CD4-positive, alpha-beta T cell (primary cell): ENCODE measurements at regions of chr4 and their contacts with region 1.

Region 1: GRCh38 chr4:81494031-81494431 is 22.3 kb upstream of the RASGEF1B start:
- DNase-seq: peak in 3 of 14 experiments; percentile 57 to 73 (median 59)
- ATAC-seq: no peak
- H3K4me3 ChIP-seq: peak overlapping the region; percentile 36
- H3K4me3 Mint-ChIP-seq: peak overlapping the region; percentile 75
- H3K27ac ChIP-seq: peak overlapping the region; percentile 44 to 52
- H3K27ac Mint-ChIP-seq: peak overlapping the region; percentile 79
- H3K4me1 ChIP-seq: peaks cover 13% of the 10 kb centered on the region
- H3K4me1 Mint-ChIP-seq: peaks cover 50% of the 10 kb centered on the region
- H3K27me3 ChIP-seq: no peaks in the 10 kb centered on the region
- H3K27me3 Mint-ChIP-seq: no peaks in the 10 kb centered on the region
- CTCF ChIP-seq: no peak

Region 2: GRCh38 chr4:81505004-81505598 is 11.1 kb after region 1 on chr4:
- CTCF ChIA-PET with region 1: interaction called, 3 read pairs
- POLR2A ChIA-PET with region 1: interaction called, 7 read pairs
- intact Hi-C with region 1: loop called in 1 of 2 experiments (anchors 1 kb)
- DNase-seq: peak; percentile 27 to 85 (median 58)
- ATAC-seq: peak; percentile 89
- H3K4me3 ChIP-seq: no peak overlapping the region
- H3K4me3 Mint-ChIP-seq: peak overlapping the region; percentile 52
- H3K27ac ChIP-seq: peak overlapping the region; percentile 47 to 71
- H3K27ac Mint-ChIP-seq: peak overlapping the region; percentile 89
- H3K4me1 ChIP-seq: peaks cover 30% of the 10 kb centered on the region
- H3K4me1 Mint-ChIP-seq: peaks cover 32% of the 10 kb centered on the region
- H3K27me3 ChIP-seq: no peaks in the 10 kb centered on the region
- H3K27me3 Mint-ChIP-seq: no peaks in the 10 kb centered on the region
- CTCF ChIP-seq: no peak

Region 3: GRCh38 chr4:81648576-81649275 is 154.7 kb after region 1 on chr4:
- CTCF ChIA-PET with region 1: no interaction called
- POLR2A ChIA-PET with region 1: no interaction called
- intact Hi-C with region 1: loop called in 1 of 2 experiments (anchors 5 kb)
- DNase-seq: peak in 11 of 14 experiments; percentile 4 to 67 (median 24)
- ATAC-seq: peak; percentile 96
- H3K4me3 ChIP-seq: no peak overlapping the region
- H3K4me3 Mint-ChIP-seq: peak overlapping the region; percentile 3
- H3K27ac ChIP-seq: no peak overlapping the region
- H3K27ac Mint-ChIP-seq: peak overlapping the region; percentile 5
- H3K4me1 ChIP-seq: peaks cover 4% of the 10 kb centered on the region
- H3K4me1 Mint-ChIP-seq: peaks cover 55% of the 10 kb centered on the region
- H3K27me3 ChIP-seq: no peaks in the 10 kb centered on the region
- H3K27me3 Mint-ChIP-seq: no peaks in the 10 kb centered on the region
- CTCF ChIP-seq: no peak